HAP-1 (cell line): ENCODE measurements at regions of chr13 and their contacts with region 1.

Region 1: DNA sequence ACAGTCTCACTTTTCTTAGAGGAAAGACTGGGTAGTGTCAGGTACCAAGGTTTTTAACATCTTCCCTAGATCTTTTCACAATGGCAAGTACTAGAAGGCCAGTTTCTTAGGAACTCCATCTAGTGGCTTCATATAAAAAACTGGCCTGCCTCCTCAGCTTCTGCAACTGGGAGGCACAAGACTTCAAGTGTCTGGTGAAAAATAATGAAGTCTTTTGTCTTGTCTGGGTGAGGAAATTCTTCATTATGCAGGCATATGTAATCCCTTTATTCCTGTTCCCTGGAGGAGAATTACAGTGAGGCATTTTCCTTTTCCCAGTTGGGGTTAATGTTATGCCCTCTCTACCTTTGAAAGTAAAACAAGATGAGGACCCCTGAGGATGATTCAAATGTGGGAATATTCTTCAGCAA is 300.5 kb downstream of the NALCN start:
- DNase-seq: peak; percentile 10 to 20
- H3K4me3 ChIP-seq: no peak overlapping the region
- H3K4me1 ChIP-seq: no peaks in the 10 kb centered on the region
- H3K27me3 ChIP-seq: 0 out of 2 replicates have a peak, but pooled peaks cover 3% of the 10 kb centered on the region

Region 2: GRCh38 chr13:100674848-100675660 is 440.7 kb before region 1 on chr13:
- in situ Hi-C with region 1: loop called (anchors 25 kb)
- DNase-seq: peak; percentile 92 to 99
- H3K4me3 ChIP-seq: peak overlapping the region; percentile 53
- H3K4me1 ChIP-seq: peaks cover 7% of the 10 kb centered on the region; the same call in 1 of the 2 replicates
- H3K27me3 ChIP-seq: no peaks in the 10 kb centered on the region